ENCODE measurements at regions of chr7 and their contacts with region 1.

Region 1: GRCh38 chr7:8436965-8437364 is 3.6 kb downstream of the NXPH1 start:
- DNase-seq: peak; percentile 40 to 42
- ATAC-seq: peak; percentile 60 to 86; a peak in 3 of 6 replicates
- H3K4me3 ChIP-seq: no peak overlapping the region
- H3K27ac ChIP-seq: no peak overlapping the region
- H3K4me1 ChIP-seq: no peaks in the 10 kb centered on the region
- CTCF ChIP-seq: peak; percentile 53
- EP300 ChIP-seq: no peak
- POLR2A ChIP-seq: no peak
- RAD21 ChIP-seq: peak; percentile 47 to 67

Region 2: DNA sequence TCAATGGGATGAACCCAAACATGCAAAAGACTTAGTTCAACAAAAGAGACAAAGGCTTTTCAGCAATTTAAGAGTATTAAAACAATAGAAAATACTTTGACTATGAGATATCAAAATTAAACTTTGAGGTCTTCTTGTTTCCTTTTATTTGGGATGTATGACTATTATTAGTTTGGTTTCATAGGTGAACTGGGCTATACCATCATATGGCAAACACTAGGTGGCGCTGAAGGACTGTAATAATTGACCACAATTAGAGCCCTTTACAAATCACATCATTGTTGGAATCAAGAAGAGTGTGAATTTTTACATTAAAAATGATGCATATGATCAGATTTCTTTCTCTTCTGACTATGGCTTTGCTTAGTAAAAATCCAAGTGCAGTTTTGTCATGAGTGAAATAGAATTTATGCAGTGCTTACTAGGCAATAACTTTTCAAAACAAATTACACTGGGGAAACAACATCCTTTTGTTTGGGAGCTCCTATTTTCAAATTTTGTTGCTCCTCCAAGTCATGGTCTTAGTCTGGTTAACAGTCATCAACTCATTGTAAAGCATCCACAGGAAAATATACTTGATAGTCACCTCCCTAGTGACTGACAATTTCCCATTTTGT is 18.2 kb before region 1 on chr7:
- CTCF ChIA-PET with region 1: interaction called, 13 read pairs
- POLR2A ChIA-PET with region 1: no interaction called
- DNase-seq: peak; percentile 31 to 68
- ATAC-seq: peak; percentile 74 to 90; a peak in 4 of 6 replicates
- H3K4me3 ChIP-seq: no peak overlapping the region
- H3K27ac ChIP-seq: no peak overlapping the region
- H3K4me1 ChIP-seq: no peaks in the 10 kb centered on the region
- CTCF ChIP-seq: peak; percentile 81
- EP300 ChIP-seq: no peak
- POLR2A ChIP-seq: no peak
- RAD21 ChIP-seq: peak; percentile 75 to 80

Measured in A549 (cell line).